K562 (cell line): ENCODE measurements at regions of chr15 and their contacts with region 1.

Region 1: DNA sequence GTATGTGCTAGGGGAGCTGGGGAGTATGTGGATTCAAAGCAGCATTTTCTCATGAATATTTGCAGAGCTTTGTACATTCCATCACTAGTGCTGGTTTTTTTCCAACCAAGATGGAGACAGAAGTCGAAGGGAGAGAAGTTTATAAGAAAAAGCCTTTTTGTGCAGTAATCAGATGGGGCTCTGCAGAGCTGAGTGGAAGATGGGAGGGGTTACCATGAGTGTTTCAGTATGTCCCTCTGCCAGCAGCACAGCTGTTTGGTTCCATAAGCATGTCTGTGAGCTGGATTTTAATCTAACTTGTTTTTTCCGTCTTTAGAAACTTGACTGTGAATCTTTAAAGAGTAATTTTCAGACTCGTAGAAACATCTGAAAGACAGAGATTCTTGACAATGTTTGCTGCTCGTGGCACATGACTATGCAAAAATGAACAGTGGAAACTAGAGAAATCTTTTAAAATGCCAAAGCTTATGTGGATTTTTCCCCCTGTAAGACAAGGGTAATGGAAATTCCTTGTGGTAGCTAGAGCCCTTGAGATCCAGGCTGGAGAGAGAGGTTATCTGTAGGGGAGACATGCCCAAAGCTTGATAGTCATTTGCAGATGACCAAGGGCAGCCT is 20.3 kb downstream of the STARD9 start:
- DNase-seq: no peak
- ATAC-seq: peak; percentile 72
- H3K4me3 ChIP-seq: no peak overlapping the region
- H3K27ac ChIP-seq: peak overlapping the region; percentile 41; the same call in 1 of the 3 replicates
- H3K4me1 ChIP-seq: peaks cover 0 to 9% of the 10 kb centered on the region in 2 experiments; a peak in 3 of 5 replicates
- H3K27me3 ChIP-seq: no peaks in the 10 kb centered on the region
- CTCF ChIP-seq: no peak
- EP300 ChIP-seq: no peak
- POLR2A ChIP-seq: no peak
- RAD21 ChIP-seq: no peak

Region 2: DNA sequence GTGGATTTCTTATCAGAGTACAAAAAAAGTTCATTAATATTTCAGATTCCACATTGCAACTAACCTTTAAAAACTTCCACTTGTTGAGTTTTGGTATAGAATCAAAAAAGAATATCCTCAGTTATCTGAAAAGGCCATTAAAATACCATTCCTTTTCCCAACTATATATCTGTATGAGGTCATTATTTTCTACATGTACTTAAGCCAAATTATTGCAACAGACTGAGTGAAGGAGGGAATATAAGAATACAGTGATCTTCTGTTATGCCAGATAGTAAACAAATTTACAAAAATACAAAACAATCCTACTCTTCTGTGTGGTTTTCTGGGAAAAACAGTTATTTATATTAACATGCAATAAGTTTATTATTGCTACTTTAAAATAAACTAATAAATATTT is 328.4 kb before region 1 on chr15:
- CTCF ChIA-PET with region 1: no interaction called
- POLR2A ChIA-PET with region 1: no interaction called
- in situ Hi-C with region 1: no loop called
- intact Hi-C with region 1: no loop called
- DNase-seq: no peak
- ATAC-seq: no peak
- H3K4me3 ChIP-seq: no peak overlapping the region
- H3K27ac ChIP-seq: no peak overlapping the region
- H3K4me1 ChIP-seq: no peaks in the 10 kb centered on the region
- H3K27me3 ChIP-seq: no peaks in the 10 kb centered on the region
- CTCF ChIP-seq: no peak
- EP300 ChIP-seq: no peak
- POLR2A ChIP-seq: no peak
- RAD21 ChIP-seq: no peak

Region 3: DNA sequence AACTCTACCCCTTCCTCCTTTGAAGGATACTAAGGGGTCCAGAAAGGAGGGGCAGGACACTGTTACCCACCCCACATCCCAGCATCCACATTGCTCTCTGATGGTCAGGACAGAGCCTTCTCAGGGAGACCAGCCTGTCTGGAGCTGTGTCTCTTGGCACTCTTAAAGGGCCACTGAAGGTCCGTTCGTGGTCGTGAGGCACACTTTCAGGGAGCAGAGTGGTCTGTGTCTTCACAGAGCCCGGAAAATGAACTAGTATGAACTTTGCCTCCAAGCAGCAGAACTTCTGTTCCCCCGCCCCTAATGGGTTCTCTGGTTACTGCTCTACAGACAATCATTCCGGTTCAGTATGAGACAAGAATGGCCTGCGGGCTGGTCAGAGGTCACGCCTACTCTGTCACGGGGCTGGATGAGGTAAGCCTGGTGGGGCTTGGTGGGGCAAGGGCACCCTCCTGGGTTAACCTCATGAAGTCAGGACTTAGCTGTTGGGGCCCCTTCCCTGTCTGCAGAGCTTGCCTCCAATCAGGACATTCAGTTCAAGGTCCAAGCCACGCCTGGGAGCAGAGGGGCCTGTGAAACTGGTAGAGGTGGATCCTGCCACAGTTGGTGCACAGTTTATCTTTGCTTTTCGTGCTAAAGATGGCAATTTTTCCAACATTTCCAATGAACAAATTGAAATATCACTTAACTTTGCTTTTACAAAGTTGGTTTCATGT is 203.3 kb before region 1 on chr15:
- CTCF ChIA-PET with region 1: no interaction called
- POLR2A ChIA-PET with region 1: no interaction called
- in situ Hi-C with region 1: no loop called
- intact Hi-C with region 1: no loop called
- DNase-seq: peak in 1 of 4 experiments; percentile 25
- ATAC-seq: peak; percentile 50
- H3K4me3 ChIP-seq: no peak overlapping the region
- H3K27ac ChIP-seq: no peak overlapping the region
- H3K4me1 ChIP-seq: peaks cover 3 to 9% of the 10 kb centered on the region in 2 experiments; a peak in 3 of 5 replicates
- H3K27me3 ChIP-seq: peaks cover 0 to 17% of the 10 kb centered on the region in 2 experiments; a peak in 3 of 5 replicates
- CTCF ChIP-seq: no peak
- EP300 ChIP-seq: no peak
- POLR2A ChIP-seq: no peak
- RAD21 ChIP-seq: no peak

Region 4: DNA sequence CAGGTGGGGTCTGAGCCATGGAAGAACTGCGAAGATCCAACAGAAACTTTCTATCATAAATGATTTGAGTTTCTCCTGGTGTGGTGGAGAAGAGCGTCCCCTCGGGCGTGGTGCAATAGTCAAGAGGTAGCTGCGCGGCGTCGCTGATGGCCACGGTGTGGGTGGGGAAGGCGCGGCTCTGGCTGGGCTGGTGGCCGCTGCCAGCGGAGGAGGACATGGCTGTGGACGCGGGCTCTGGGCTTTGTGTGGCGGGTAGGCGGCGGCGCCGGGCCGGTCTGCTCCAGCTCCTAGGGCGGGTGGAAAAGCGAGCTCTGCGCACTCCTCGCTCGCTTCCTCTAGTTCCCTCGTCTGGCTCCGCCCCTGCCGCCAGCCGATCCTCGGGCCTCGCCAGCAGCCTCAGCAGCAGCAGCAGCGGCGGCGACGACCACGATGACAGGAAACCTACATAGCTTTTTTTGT is 14.4 kb before region 1 on chr15:
- CTCF ChIA-PET with region 1: no interaction called
- POLR2A ChIA-PET with region 1: interaction called, 35 read pairs
- in situ Hi-C with region 1: no loop called
- intact Hi-C with region 1: no loop called
- DNase-seq: peak; percentile 29 to 83 (median 48)
- ATAC-seq: peak; percentile 91
- H3K4me3 ChIP-seq: peak overlapping the region; percentile 31
- H3K27ac ChIP-seq: no peak overlapping the region
- H3K4me1 ChIP-seq: peaks cover 26 to 29% of the 10 kb centered on the region in 2 experiments
- H3K27me3 ChIP-seq: no peaks in the 10 kb centered on the region
- CTCF ChIP-seq: no peak
- EP300 ChIP-seq: no peak
- POLR2A ChIP-seq: no peak
- RAD21 ChIP-seq: 0 out of 4 replicates have a peak, but pooled peaks of 1 of the 2 experiments have one; percentile 6

Region 5: DNA sequence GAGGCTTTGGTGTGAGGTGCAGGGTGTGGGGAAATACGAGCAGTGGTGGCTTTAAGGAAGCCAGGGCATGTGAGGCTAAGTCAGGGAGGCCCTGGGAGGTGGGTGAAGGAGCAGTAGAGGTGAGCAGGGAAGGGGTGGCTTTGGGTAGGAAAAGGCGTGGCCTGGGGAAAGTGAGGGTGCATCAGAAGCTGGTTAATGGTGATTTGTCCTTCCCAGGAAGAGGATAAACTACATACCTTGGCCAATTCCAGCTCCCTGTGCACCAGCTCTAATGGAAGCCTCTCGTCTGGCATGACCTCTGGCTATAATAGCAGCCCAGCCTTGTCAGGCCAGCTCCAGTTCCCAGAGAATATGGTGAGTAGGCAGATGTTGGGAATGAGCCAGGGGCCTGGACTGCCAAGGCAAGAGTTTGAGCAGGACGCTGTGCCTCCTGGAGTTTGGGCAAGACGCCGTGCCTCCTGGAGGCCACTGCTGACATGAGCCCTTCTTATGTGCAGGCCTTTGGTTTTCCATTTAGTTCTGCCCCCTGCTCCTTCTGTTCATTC is 99.9 kb after region 1 on chr15:
- CTCF ChIA-PET with region 1: no interaction called
- POLR2A ChIA-PET with region 1: no interaction called
- in situ Hi-C with region 1: no loop called
- intact Hi-C with region 1: no loop called
- DNase-seq: no peak
- ATAC-seq: no peak
- H3K4me3 ChIP-seq: no peak overlapping the region
- H3K27ac ChIP-seq: no peak overlapping the region
- H3K4me1 ChIP-seq: no peaks in the 10 kb centered on the region; a peak in 2 of 5 replicates
- H3K27me3 ChIP-seq: no peaks in the 10 kb centered on the region
- CTCF ChIP-seq: no peak
- EP300 ChIP-seq: no peak
- POLR2A ChIP-seq: no peak
- RAD21 ChIP-seq: no peak

Region 6: DNA sequence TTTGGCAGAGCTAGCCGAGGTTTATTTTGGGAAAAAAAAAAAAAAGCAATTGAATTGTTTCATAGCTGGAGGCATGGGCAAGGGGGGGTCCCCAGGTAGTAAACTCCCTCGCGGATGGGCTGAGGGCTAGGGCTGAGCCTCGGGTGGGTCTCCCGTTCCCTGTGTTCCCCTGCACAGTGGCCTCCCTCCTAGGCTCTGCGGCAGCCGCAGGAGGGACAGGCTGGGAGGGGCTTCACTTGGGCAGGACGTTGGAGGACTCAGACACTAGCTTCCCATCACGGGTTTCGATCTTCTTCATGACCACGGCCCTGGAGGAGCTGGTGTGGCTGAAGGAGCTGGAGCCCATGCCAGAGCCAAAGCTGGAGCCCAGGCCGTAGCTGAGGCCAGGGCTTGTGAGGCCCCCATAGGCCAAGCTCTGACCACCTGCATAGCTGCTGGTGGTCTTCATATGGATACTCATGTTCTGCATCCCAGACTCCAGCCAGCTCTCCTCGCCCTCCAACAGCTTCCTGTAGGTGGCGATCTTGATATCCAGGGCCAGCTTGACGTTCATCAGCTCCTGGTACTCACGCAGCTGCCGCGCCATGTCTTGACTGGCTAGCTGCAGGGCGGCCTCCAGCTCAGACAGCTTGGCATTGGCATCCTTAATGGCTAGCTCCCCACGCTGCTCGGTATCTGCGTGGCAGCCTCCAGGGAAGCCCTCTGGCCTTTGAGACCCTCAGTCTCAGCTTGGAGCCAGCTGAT is 205.2 kb after region 1 on chr15:
- CTCF ChIA-PET with region 1: no interaction called
- POLR2A ChIA-PET with region 1: no interaction called
- in situ Hi-C with region 1: no loop called
- intact Hi-C with region 1: no loop called
- DNase-seq: peak in 1 of 4 experiments; percentile 21
- ATAC-seq: no peak
- H3K4me3 ChIP-seq: no peak overlapping the region
- H3K27ac ChIP-seq: no peak overlapping the region
- H3K4me1 ChIP-seq: peaks cover 0 to 4% of the 10 kb centered on the region in 2 experiments; a peak in 1 of 5 replicates
- H3K27me3 ChIP-seq: no peaks in the 10 kb centered on the region
- CTCF ChIP-seq: peak; percentile 27 to 44 (median 42); a peak in 5 of 6 replicates
- EP300 ChIP-seq: no peak
- POLR2A ChIP-seq: no peak
- RAD21 ChIP-seq: peak in 1 of 2 experiments; percentile 36; a peak in 2 of 4 replicates